CD4-positive, alpha-beta T cell (primary cell): ENCODE measurements at regions of chr20 and their contacts with region 1.

Region 1: GRCh38 chr20:35741892-35742740 is at the start of gene RBM39:
- DNase-seq: peak; percentile 96 to 100 (median 99)
- ATAC-seq: peak; percentile 80
- H3K4me3 ChIP-seq: peak within 1 kb of the TSS; percentile 84
- H3K4me3 Mint-ChIP-seq: peak within 1 kb of the TSS; percentile 99
- H3K27ac ChIP-seq: peak within 1 kb of the TSS; percentile 99 to 100
- H3K27ac Mint-ChIP-seq: peak within 1 kb of the TSS; percentile 99
- H3K4me1 ChIP-seq: peaks cover 44% of the 10 kb centered on the region
- H3K4me1 Mint-ChIP-seq: peaks cover 56% of the 10 kb centered on the region
- H3K27me3 ChIP-seq: no peaks in the 10 kb centered on the region
- H3K27me3 Mint-ChIP-seq: no peaks in the 10 kb centered on the region
- CTCF ChIP-seq: peak; percentile 57
- total RNA-seq, gene RBM39: 1,057 to 1,091 TPM

Region 2: GRCh38 chr20:34495916-34496315 is 1246.2 kb before region 1 on chr20:
- CTCF ChIA-PET with region 1: no interaction called
- POLR2A ChIA-PET with region 1: no interaction called
- intact Hi-C with region 1: no loop called
- DNase-seq: no peak
- ATAC-seq: no peak
- H3K4me3 ChIP-seq: no peak overlapping the region
- H3K4me3 Mint-ChIP-seq: no peak overlapping the region
- H3K27ac ChIP-seq: no peak overlapping the region
- H3K27ac Mint-ChIP-seq: no peak overlapping the region
- H3K4me1 ChIP-seq: no peaks in the 10 kb centered on the region
- H3K4me1 Mint-ChIP-seq: no peaks in the 10 kb centered on the region
- H3K27me3 ChIP-seq: no peaks in the 10 kb centered on the region
- H3K27me3 Mint-ChIP-seq: no peaks in the 10 kb centered on the region
- CTCF ChIP-seq: no peak

Region 3: GRCh38 chr20:35619196-35620095 is 122.7 kb before region 1 on chr20:
- CTCF ChIA-PET with region 1: interaction called, 6 read pairs
- POLR2A ChIA-PET with region 1: interaction called, 103 read pairs
- intact Hi-C with region 1: loop called in 1 of 2 experiments (anchors 5 kb)
- DNase-seq: peak; percentile 50 to 91 (median 68)
- ATAC-seq: peak; percentile 9
- H3K4me3 ChIP-seq: peak overlapping the region; percentile 66
- H3K4me3 Mint-ChIP-seq: peak overlapping the region; percentile 91
- H3K27ac ChIP-seq: peak overlapping the region in 1 of 2 donors; percentile 15
- H3K27ac Mint-ChIP-seq: peak overlapping the region; percentile 94
- H3K4me1 ChIP-seq: peaks cover 45% of the 10 kb centered on the region
- H3K4me1 Mint-ChIP-seq: peaks cover 39% of the 10 kb centered on the region
- H3K27me3 ChIP-seq: no peaks in the 10 kb centered on the region
- H3K27me3 Mint-ChIP-seq: no peaks in the 10 kb centered on the region
- CTCF ChIP-seq: peak; percentile 59

Region 4: GRCh38 chr20:35711588-35712209 is 30.4 kb before region 1 on chr20:
- CTCF ChIA-PET with region 1: interaction called, 3 read pairs
- POLR2A ChIA-PET with region 1: interaction called, 20 read pairs
- intact Hi-C with region 1: no loop called
- DNase-seq: no peak
- ATAC-seq: no peak
- H3K4me3 ChIP-seq: no peak overlapping the region
- H3K4me3 Mint-ChIP-seq: peak overlapping the region; percentile 35
- H3K27ac ChIP-seq: peak overlapping the region in 1 of 2 donors; percentile 38
- H3K27ac Mint-ChIP-seq: peak overlapping the region; percentile 47
- H3K4me1 ChIP-seq: peaks cover 30% of the 10 kb centered on the region
- H3K4me1 Mint-ChIP-seq: peaks cover 69% of the 10 kb centered on the region
- H3K27me3 ChIP-seq: no peaks in the 10 kb centered on the region
- H3K27me3 Mint-ChIP-seq: no peaks in the 10 kb centered on the region
- CTCF ChIP-seq: no peak

Region 5: GRCh38 chr20:35757098-35757705 is 15.1 kb after region 1 on chr20:
- CTCF ChIA-PET with region 1: interaction called, 5 read pairs
- POLR2A ChIA-PET with region 1: interaction called, 891 read pairs
- intact Hi-C with region 1: no loop called
- DNase-seq: no peak
- ATAC-seq: peak; percentile 52
- H3K4me3 ChIP-seq: no peak overlapping the region
- H3K4me3 Mint-ChIP-seq: no peak overlapping the region
- H3K27ac ChIP-seq: no peak overlapping the region
- H3K27ac Mint-ChIP-seq: no peak overlapping the region
- H3K4me1 ChIP-seq: peaks cover 3% of the 10 kb centered on the region
- H3K4me1 Mint-ChIP-seq: peaks cover 9% of the 10 kb centered on the region
- H3K27me3 ChIP-seq: no peaks in the 10 kb centered on the region
- H3K27me3 Mint-ChIP-seq: no peaks in the 10 kb centered on the region
- CTCF ChIP-seq: no peak

Region 6: GRCh38 chr20:35801865-35802264 is 59.7 kb after region 1 on chr20:
- CTCF ChIA-PET with region 1: no interaction called
- POLR2A ChIA-PET with region 1: interaction called, 38 read pairs
- intact Hi-C with region 1: no loop called
- DNase-seq: no peak
- ATAC-seq: no peak
- H3K4me3 ChIP-seq: no peak overlapping the region
- H3K4me3 Mint-ChIP-seq: no peak overlapping the region
- H3K27ac ChIP-seq: no peak overlapping the region
- H3K27ac Mint-ChIP-seq: peak overlapping the region; percentile 3
- H3K4me1 ChIP-seq: peaks cover 11% of the 10 kb centered on the region
- H3K4me1 Mint-ChIP-seq: peaks cover 15% of the 10 kb centered on the region
- H3K27me3 ChIP-seq: no peaks in the 10 kb centered on the region
- H3K27me3 Mint-ChIP-seq: no peaks in the 10 kb centered on the region
- CTCF ChIP-seq: no peak

Region 7: DNA sequence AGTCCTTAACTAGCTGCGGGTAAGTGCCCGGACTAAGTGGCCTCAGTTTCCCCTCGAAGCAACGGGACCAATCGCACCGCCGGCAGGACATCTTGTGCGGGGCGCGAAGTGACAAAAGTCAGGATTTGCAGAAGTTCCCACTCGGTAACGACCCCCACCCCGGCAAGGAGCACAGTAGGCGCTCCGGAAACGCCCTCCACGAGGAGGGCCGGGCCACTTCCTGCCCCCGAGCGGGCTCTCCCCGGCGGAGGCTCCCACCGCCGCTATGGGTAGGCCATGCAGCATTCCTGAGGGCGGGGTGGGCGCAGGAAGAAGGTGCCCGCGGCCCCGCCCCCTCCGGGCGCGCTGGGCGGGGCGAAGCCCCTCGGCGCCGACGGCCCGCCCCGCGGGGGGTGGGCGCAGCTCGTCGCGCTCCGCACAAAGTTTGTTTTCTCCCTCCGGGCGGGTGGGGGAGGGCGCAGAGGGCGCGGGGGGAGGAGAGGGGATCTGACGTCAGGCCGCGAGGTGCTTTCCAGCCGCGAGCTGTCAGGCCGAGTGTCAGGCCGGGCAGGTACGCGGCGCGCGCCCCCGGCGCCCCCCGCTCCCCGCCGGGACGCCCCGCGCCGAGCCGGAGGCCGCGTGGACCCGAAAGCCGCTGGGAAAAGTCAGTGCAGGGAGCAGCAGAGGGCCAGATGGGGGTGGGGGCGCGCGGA is 831.1 kb after region 1 on chr20 and contains the start of gene TGIF2:
- CTCF ChIA-PET with region 1: interaction called, 3 read pairs
- POLR2A ChIA-PET with region 1: interaction called, 13 read pairs
- intact Hi-C with region 1: no loop called
- DNase-seq: peak; percentile 82 to 95 (median 88)
- ATAC-seq: peak; percentile 71
- H3K4me3 ChIP-seq: peak within 1 kb of the TSS; percentile 97
- H3K4me3 Mint-ChIP-seq: peak within 1 kb of the TSS; percentile 95
- H3K27ac ChIP-seq: peak within 1 kb of the TSS; percentile 100
- H3K27ac Mint-ChIP-seq: peak within 1 kb of the TSS; percentile 97
- H3K4me1 ChIP-seq: peaks cover 45% of the 10 kb centered on the region
- H3K4me1 Mint-ChIP-seq: peaks cover 40% of the 10 kb centered on the region
- H3K27me3 ChIP-seq: no peaks in the 10 kb centered on the region
- H3K27me3 Mint-ChIP-seq: no peaks in the 10 kb centered on the region
- CTCF ChIP-seq: no peak
- total RNA-seq, gene TGIF2: 29.2 to 34.5 TPM